Cardiac septum (tissue), 1 donor: ENCODE measurements at regions of chr5 and their contacts with region 1.

Region 1: GRCh38 chr5:173907686-173908371 is 19.7 kb downstream of the CPEB4 start:
- DNase-seq: no peak

Region 2: GRCh38 chr5:173895401-173896165 is 12.2 kb before region 1 on chr5:
- intact Hi-C with region 1: loop called (anchors 2 kb)
- DNase-seq: no peak